Transverse colon (tissue), 4 donors: ENCODE measurements at regions of chr4 and their contacts with region 1.

Region 1: GRCh38 chr4:47882228-47882627 is 32.2 kb downstream of the NFXL1 start:
- DNase-seq: no peak
- H3K4me3 ChIP-seq: no peak overlapping the region
- H3K27ac ChIP-seq: no peak overlapping the region
- H3K4me1 ChIP-seq: peaks cover 0 to 9% (median 4%) of the 10 kb centered on the region in 4 donors
- H3K27me3 ChIP-seq: no peaks in the 10 kb centered on the region
- CTCF ChIP-seq: no peak
- EP300 ChIP-seq: no peak
- POLR2A ChIP-seq: no peak

Region 2: DNA sequence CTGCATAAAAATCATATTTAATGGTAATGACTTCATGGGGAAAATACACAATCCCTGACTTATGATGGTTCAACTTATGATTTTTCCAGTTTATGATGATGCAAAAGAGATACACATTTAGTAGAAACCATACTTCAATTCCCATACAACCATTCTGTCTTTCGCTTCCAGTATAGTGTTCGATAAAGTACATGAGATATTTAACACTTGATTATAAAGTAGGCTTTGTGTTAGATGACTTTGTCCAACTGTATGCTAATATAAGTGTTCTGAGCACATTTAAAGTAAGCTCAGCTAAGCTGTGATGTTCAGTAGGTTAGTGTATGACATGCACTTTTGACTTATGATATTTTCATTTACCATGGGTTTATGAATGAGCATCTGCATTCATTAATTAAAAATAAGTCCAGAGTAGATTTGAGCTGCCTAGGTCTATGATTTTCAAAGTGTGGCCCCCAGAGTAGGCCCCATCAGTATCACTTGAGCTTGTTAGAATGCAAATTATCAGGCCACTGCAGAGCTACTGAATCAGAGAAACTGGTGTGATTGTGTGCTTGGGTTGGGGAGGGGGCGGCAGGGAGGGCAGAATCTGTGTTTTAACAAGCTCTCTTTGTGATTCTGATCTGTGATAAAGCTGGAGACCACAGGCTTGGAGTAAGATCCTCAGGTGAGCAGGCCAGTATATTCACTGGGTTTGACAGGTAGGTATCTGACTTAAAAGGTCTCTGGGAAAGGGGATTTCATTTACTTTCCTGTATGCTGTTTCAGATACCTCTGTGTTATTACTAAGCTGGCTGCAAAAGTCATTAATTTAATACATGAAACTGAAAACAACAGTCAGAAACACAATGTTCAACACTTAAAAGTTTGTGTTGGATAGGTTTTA is 388.7 kb before region 1 on chr4:
- in situ Hi-C with region 1: no loop called
- intact Hi-C with region 1: no loop called
- DNase-seq: no peak
- H3K4me3 ChIP-seq: no peak overlapping the region
- H3K27ac ChIP-seq: no peak overlapping the region
- H3K4me1 ChIP-seq: peaks cover 0 to 14% (median 0%) of the 10 kb centered on the region in 4 donors
- H3K27me3 ChIP-seq: no peaks in the 10 kb centered on the region
- CTCF ChIP-seq: no peak
- EP300 ChIP-seq: no peak
- POLR2A ChIP-seq: no peak

Region 3: GRCh38 chr4:47686294-47686872 is 195.8 kb before region 1 on chr4:
- in situ Hi-C with region 1: no loop called
- intact Hi-C with region 1: no loop called
- DNase-seq: peak; percentile 57
- H3K4me3 ChIP-seq: no peak overlapping the region
- H3K27ac ChIP-seq: no peak overlapping the region
- H3K4me1 ChIP-seq: no peaks in the 10 kb centered on the region
- H3K27me3 ChIP-seq: peaks cover 12% of the 10 kb centered on the region
- CTCF ChIP-seq: peak; percentile 50 to 62 (median 58)
- EP300 ChIP-seq: no peak
- POLR2A ChIP-seq: no peak

Region 4: DNA sequence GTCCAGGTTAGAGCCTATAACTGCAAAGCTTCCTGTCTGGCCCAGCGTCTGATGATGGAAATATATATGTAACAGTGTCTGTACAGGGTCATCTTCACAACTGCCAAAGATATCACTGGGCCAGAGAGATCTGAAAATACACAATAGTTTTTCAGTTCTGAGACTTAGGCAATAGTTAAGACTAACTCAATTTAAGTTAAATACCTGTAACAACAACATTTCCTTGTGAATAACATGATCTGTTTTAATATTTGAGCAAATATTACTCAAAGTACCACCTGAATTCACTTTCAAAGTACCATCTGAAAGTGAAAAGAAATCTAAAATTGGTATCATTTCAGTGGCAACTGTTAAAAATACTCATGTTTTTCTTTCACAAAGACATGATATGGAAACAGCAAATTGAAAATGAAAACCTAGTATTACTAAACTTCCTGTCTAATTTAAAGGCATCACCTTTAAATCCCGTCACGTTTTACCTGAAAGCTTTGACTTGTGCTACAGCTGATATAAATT is 617.4 kb after region 1 on chr4:
- in situ Hi-C with region 1: loop called in 1 of 4 experiments (anchors 25 kb)
- intact Hi-C with region 1: no loop called
- DNase-seq: no peak
- H3K4me3 ChIP-seq: no peak overlapping the region
- H3K27ac ChIP-seq: no peak overlapping the region
- H3K4me1 ChIP-seq: no peaks in the 10 kb centered on the region
- H3K27me3 ChIP-seq: no peaks in the 10 kb centered on the region
- CTCF ChIP-seq: no peak
- EP300 ChIP-seq: no peak
- POLR2A ChIP-seq: no peak